Gastrocnemius medialis (tissue), 4 donors: ENCODE measurements at regions of chr5 and their contacts with region 1.

Region 1: GRCh38 chr5:36507332-36507952 is 99.0 kb upstream of the SLC1A3 start:
- DNase-seq: peak; percentile 30 to 56
- ATAC-seq: peak; percentile 60 to 70
- H3K4me3 ChIP-seq: no peak overlapping the region
- H3K27ac ChIP-seq: no peak overlapping the region
- H3K4me1 ChIP-seq: no peaks in the 10 kb centered on the region
- H3K27me3 ChIP-seq: no peaks in the 10 kb centered on the region
- CTCF ChIP-seq: peak in 4 of 5 experiments; percentile 48 to 80 (median 68)
- POLR2A ChIP-seq: no peak

Region 2: DNA sequence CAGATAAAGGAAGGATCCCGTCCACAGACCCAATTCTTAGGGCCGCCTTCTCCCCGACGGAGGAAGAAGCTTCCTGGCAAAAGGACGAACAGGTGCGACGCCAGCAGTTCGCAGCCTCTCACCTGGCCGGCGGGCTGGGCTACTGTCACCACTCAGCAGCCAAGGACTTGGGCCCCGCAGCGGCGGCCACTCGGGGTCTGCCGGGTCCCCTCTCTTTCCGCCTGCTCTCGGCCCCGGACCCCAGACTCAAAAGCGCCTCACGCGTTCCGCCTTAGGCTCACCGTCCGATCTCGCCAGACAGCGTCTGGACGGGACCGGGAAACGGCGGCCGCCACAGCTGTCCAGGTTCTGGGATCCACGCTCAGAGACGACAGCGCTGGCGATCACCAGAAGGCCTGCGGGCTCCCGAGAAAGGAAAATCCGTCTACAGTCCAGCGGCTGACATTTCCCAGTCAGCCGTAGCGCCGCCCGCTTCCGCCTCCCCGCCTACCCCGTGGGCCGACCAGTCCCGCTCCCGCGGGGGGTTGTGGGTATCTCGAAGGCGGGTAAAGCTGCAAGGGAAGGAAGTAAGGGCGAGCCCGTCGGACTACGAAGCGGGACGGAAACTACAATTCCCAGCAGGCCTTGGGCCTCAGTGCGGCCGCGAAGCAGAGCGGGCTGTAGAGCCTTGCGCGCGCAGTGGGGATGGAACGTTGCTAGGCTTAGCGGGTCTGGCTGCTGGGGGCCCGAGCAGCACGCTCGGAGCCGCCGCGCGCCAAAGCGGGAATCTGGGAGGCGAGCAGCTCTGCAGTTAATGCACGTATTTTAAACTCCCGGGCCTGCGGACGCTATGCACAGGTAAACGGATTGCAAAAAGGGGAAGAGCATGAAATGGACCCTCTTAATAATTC is 355.8 kb before region 1 on chr5 and contains the starts of genes LMBRD2 and SKP2:
- in situ Hi-C with region 1: no loop called
- intact Hi-C with region 1: no loop called
- DNase-seq: peak; percentile 96
- ATAC-seq: peak; percentile 99
- H3K4me3 ChIP-seq: peak within 1 kb of the TSS; percentile 89 to 99 (median 92)
- H3K27ac ChIP-seq: peak within 1 kb of the TSS; percentile 88 to 95 (median 92)
- H3K4me1 ChIP-seq: peaks cover 32 to 41% of the 10 kb centered on the region in 2 donors
- H3K27me3 ChIP-seq: no peaks in the 10 kb centered on the region
- CTCF ChIP-seq: no peak
- POLR2A ChIP-seq: peak; percentile 58 to 74
- total RNA-seq, gene LMBRD2: 12.2 to 29.0 (median 21.3) TPM
- total RNA-seq, gene SKP2: 2.8 to 6.7 (median 3.1) TPM

Region 3: GRCh38 chr5:36252722-36253365 is 254.6 kb before region 1 on chr5:
- in situ Hi-C with region 1: loop called in 1 of 4 experiments (anchors 25 kb)
- intact Hi-C with region 1: loop called (anchors 10 kb)
- DNase-seq: no peak
- ATAC-seq: peak; percentile 56 to 66
- H3K4me3 ChIP-seq: no peak overlapping the region
- H3K27ac ChIP-seq: no peak overlapping the region
- H3K4me1 ChIP-seq: no peaks in the 10 kb centered on the region
- H3K27me3 ChIP-seq: no peaks in the 10 kb centered on the region
- CTCF ChIP-seq: no peak
- POLR2A ChIP-seq: no peak

Region 4: GRCh38 chr5:36269479-36270219 is 237.8 kb before region 1 on chr5:
- in situ Hi-C with region 1: loop called in 1 of 4 experiments (anchors 25 kb)
- intact Hi-C with region 1: loop called (anchors 5 kb)
- DNase-seq: no peak
- ATAC-seq: no peak
- H3K4me3 ChIP-seq: no peak overlapping the region
- H3K27ac ChIP-seq: no peak overlapping the region
- H3K4me1 ChIP-seq: no peaks in the 10 kb centered on the region
- H3K27me3 ChIP-seq: no peaks in the 10 kb centered on the region
- CTCF ChIP-seq: no peak
- POLR2A ChIP-seq: no peak

Region 5: GRCh38 chr5:36414869-36415282 is 92.6 kb before region 1 on chr5:
- in situ Hi-C with region 1: loop called in 2 of 4 experiments (anchors 5 to 10 kb)
- intact Hi-C with region 1: loop called (anchors 1 kb)
- DNase-seq: no peak
- ATAC-seq: peak; percentile 66 to 70
- H3K4me3 ChIP-seq: no peak overlapping the region
- H3K27ac ChIP-seq: no peak overlapping the region
- H3K4me1 ChIP-seq: no peaks in the 10 kb centered on the region
- H3K27me3 ChIP-seq: no peaks in the 10 kb centered on the region
- CTCF ChIP-seq: peak in 4 of 5 experiments; percentile 35 to 59 (median 46)
- POLR2A ChIP-seq: no peak